Activated CD4-positive, alpha-beta T cell treated with anti-CD3 and anti-CD28 coated beads, Interleukin-2, amount 10 ng/mL, durations not matched to agents 24 days and 14 days (primary cell): ENCODE measurements at regions of chr3 and their contacts with region 1.

Region 1: GRCh38 chr3:186930641-186931531 is 560 bp downstream of the ST6GAL1 start:
- DNase-seq: peak; percentile 90
- H3K4me3 Mint-ChIP-seq: peak overlapping the region; percentile 99
- H3K27ac Mint-ChIP-seq: peak overlapping the region; percentile 98
- H3K4me1 Mint-ChIP-seq: peaks cover 42% of the 10 kb centered on the region
- H3K27me3 Mint-ChIP-seq: no peaks in the 10 kb centered on the region

Region 2: DNA sequence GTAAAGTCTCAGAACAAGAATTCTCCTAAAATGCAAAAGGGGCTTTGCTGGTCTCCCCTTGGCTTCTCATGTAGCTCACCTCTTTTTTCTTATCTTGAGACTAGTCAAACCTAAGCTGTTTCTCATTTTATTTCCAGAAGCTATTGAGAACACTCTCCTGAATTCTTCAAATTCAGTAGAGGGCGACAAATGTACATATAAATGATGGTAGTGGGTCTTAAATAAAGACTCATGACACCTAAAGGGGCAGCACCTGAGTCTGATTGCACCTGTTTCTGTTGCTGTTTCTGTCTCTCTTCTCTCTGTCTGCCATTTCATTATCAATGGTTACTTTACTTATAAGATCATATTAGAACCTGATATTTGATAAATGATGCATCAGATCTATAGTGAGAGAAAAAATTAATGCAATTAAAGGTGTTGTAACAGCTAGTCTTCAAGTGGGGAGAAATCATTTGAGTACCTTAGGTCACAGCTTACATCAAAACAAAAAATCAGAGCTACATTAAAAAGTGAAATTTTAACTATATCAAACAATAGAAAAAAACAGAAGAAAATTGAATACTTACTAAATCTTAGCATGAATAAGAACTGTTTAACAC is 81.4 kb before region 1 on chr3:
- intact Hi-C with region 1: loop called (anchors 1 kb)
- DNase-seq: peak; percentile 73
- H3K4me3 Mint-ChIP-seq: no peak overlapping the region
- H3K27ac Mint-ChIP-seq: peak overlapping the region; percentile 2
- H3K4me1 Mint-ChIP-seq: peaks cover 15% of the 10 kb centered on the region
- H3K27me3 Mint-ChIP-seq: peaks cover 22% of the 10 kb centered on the region

Region 3: DNA sequence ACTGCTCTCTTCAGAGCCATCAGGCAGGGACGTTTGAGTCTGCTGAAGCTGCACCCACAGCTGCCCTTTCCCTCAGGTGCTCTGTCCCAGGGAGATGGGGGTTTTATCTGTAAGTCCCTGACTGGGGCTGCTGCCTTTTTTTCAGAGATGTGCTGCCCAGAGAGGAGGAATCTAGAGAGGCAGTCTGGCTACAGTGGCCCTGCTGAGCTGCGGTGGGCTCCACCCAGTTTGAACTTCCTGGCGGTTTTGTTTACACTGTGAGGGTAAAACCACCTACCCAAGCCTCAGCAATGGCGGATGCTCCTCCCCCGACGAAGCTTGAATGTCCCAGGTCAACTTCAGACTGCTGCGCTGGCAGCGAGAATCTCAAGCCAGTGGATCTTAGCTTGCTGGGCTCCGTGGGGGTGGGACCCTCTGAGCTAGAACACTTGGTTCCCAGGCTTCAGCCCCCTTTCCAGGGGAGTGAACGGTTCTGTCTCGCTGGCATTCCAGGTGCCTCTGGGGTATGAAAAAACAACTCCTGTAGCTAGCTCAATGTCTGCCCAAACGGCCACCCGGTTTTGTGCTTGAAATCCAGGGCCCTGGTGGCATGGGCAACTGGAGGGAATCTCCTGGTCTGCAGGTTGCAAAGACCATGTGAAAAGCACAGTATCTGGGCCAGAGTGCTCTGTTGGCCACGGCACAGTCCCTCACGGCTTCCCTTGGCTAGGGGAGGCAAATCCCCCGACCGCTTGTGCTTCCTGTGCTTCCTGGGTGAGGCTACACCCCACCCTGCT is 21.6 kb before region 1 on chr3:
- intact Hi-C with region 1: loop called (anchors 1 kb)
- DNase-seq: peak; percentile 94
- H3K4me3 Mint-ChIP-seq: peak overlapping the region; percentile 63
- H3K27ac Mint-ChIP-seq: peak overlapping the region; percentile 93
- H3K4me1 Mint-ChIP-seq: peaks cover 25% of the 10 kb centered on the region
- H3K27me3 Mint-ChIP-seq: no peaks in the 10 kb centered on the region

Region 4: GRCh38 chr3:186940967-186941366 is 10.1 kb after region 1 on chr3:
- intact Hi-C with region 1: no loop called
- DNase-seq: no peak
- H3K4me3 Mint-ChIP-seq: no peak overlapping the region
- H3K27ac Mint-ChIP-seq: no peak overlapping the region
- H3K4me1 Mint-ChIP-seq: peaks cover 15% of the 10 kb centered on the region
- H3K27me3 Mint-ChIP-seq: no peaks in the 10 kb centered on the region

Region 5: DNA sequence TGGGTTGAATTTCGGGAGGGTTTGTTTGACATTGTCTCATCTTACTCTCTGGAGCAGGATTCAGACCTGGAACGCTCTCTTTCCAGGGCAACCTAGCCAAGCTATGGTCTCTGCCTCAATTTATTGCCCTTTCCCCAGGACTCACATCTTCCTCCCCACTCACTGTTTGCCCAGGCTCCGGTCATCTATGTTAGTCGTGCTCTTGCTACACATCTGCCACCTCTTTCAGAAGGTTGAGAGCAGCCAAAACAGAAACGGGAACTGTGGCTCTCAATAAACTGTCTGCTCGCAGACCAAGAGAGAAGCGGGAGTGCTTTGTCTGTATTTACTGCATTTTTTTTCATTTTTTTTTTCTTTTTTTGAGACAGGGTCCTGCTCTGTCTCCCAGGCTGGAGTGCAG is 81.0 kb after region 1 on chr3:
- intact Hi-C with region 1: loop called (anchors 1 kb)
- DNase-seq: no peak
- H3K4me3 Mint-ChIP-seq: peak overlapping the region; percentile 24
- H3K27ac Mint-ChIP-seq: peak overlapping the region; percentile 89
- H3K4me1 Mint-ChIP-seq: peaks cover 47% of the 10 kb centered on the region
- H3K27me3 Mint-ChIP-seq: no peaks in the 10 kb centered on the region

Region 6: GRCh38 chr3:187031934-187032333 is 101.0 kb after region 1 on chr3:
- intact Hi-C with region 1: no loop called
- DNase-seq: no peak
- H3K4me3 Mint-ChIP-seq: peak overlapping the region; percentile 61
- H3K27ac Mint-ChIP-seq: peak overlapping the region; percentile 70
- H3K4me1 Mint-ChIP-seq: peaks cover 56% of the 10 kb centered on the region
- H3K27me3 Mint-ChIP-seq: no peaks in the 10 kb centered on the region

Region 7: DNA sequence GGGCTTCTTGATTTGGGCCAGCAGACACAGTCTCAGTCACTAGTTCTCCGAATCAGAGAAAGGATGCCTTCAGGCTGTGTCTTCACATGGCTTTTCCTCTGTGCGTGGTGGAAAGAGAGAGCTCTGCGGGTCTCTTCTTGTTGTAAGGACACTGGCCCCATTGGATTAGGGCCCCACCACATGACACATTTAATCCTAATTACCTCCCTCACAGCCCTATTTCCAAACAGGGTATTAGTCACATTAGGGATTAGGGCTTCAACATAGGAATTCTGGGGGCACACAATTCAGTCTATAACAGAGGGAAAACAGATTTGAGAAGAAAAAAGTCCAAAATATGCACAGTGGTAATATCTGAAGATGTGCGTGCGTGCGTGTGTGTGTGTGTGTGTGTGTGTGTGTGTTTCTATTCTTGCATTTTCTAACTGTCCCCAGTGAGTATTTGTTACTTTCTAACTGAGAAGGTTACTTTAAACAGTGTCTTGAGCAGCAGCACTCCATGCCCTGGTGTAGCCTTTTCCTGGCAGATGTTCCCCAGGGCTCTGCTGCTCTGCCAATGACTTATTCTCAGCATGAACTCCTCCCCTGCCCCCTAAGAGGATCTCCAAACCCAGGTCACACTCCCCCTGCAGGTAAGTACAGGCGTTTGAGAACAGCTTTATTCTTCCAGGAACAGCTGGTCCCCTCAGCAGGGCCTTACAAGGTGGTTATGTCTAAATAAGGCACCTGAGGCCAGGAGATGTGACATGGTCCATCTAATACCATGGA is 135.5 kb after region 1 on chr3:
- intact Hi-C with region 1: loop called (anchors 2 kb)
- DNase-seq: peak; percentile 83
- H3K4me3 Mint-ChIP-seq: no peak overlapping the region
- H3K27ac Mint-ChIP-seq: peak overlapping the region; percentile 79
- H3K4me1 Mint-ChIP-seq: peaks cover 52% of the 10 kb centered on the region
- H3K27me3 Mint-ChIP-seq: no peaks in the 10 kb centered on the region